ENCODE measurements at regions of chr1 and their contacts with region 1.

Region 1: GRCh38 chr1:204207136-204207616 is 6.6 kb downstream of the GOLT1A start:
- DNase-seq: peak; percentile 89
- ATAC-seq: peak; percentile 98
- H3K4me3 Mint-ChIP-seq: no peak overlapping the region
- H3K27ac Mint-ChIP-seq: no peak overlapping the region
- H3K4me1 Mint-ChIP-seq: peaks cover 12% of the 10 kb centered on the region
- H3K27me3 Mint-ChIP-seq: peaks cover 26% of the 10 kb centered on the region

Region 2: GRCh38 chr1:204104133-204104871 is 102.9 kb before region 1 on chr1:
- CTCF ChIA-PET with region 1: no interaction called
- POLR2A ChIA-PET with region 1: no interaction called
- intact Hi-C with region 1: no loop called
- DNase-seq: peak; percentile 18
- ATAC-seq: peak; percentile 52
- H3K4me3 Mint-ChIP-seq: no peak overlapping the region
- H3K27ac Mint-ChIP-seq: peak overlapping the region; percentile 44
- H3K4me1 Mint-ChIP-seq: peaks cover 26% of the 10 kb centered on the region
- H3K27me3 Mint-ChIP-seq: peaks cover 10% of the 10 kb centered on the region

Region 3: DNA sequence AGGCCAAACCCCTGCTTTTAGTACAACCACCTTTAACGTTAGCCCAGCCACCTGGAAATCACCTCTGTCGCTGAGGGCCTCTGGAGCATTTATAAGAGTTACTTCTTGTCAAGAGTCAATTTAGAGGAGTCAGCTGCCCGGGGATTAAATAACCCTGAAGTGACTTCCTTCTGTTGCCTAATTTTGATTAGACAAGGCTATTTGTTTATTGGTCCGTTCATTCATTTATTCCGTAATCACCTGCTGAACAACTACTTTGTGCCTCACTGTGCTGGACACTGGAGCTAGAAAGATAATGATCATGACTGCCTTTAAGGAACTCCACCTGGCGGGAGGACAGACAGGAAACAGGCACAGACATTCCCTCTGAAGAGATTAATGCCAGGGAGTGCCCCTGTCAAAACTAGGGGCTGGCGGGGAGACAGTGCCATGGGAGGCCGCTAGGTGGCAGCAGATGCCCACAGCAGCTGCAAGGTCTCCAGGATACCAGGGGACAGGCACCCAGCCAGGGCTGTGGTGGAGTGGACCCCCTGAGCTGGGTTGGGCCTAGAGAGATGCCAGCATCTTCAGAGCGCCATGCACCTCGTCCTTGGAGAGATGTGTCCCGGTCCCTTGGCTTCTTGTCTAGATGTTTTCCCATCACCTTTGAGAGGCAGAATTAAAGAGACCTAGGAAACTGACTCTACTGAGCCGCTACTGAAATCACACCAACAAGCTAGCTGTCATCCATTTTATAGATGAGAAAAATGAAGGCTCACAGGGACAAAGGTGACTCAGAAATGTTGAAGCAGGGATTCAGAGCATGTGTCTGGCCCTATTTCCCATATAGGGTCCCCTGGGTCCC is 44.7 kb before region 1 on chr1:
- CTCF ChIA-PET with region 1: interaction called, 33 read pairs
- POLR2A ChIA-PET with region 1: no interaction called
- intact Hi-C with region 1: loop called (anchors 1 kb)
- DNase-seq: peak; percentile 88
- ATAC-seq: peak; percentile 98
- H3K4me3 Mint-ChIP-seq: no peak overlapping the region
- H3K27ac Mint-ChIP-seq: no peak overlapping the region
- H3K4me1 Mint-ChIP-seq: peaks cover 1% of the 10 kb centered on the region
- H3K27me3 Mint-ChIP-seq: peaks cover 7% of the 10 kb centered on the region

Region 4: GRCh38 chr1:204182882-204183281 is 24.3 kb before region 1 on chr1:
- CTCF ChIA-PET with region 1: interaction called, 10 read pairs
- POLR2A ChIA-PET with region 1: no interaction called
- intact Hi-C with region 1: no loop called
- DNase-seq: no peak
- ATAC-seq: no peak
- H3K4me3 Mint-ChIP-seq: no peak overlapping the region
- H3K27ac Mint-ChIP-seq: no peak overlapping the region
- H3K4me1 Mint-ChIP-seq: no peaks in the 10 kb centered on the region
- H3K27me3 Mint-ChIP-seq: peaks cover 10% of the 10 kb centered on the region

Region 5: GRCh38 chr1:204190212-204191211 is 16.7 kb before region 1 on chr1:
- CTCF ChIA-PET with region 1: interaction called, 17 read pairs
- POLR2A ChIA-PET with region 1: no interaction called
- intact Hi-C with region 1: no loop called
- DNase-seq: peak; percentile 46
- ATAC-seq: peak; percentile 55
- H3K4me3 Mint-ChIP-seq: no peak overlapping the region
- H3K27ac Mint-ChIP-seq: no peak overlapping the region
- H3K4me1 Mint-ChIP-seq: peaks cover 16% of the 10 kb centered on the region
- H3K27me3 Mint-ChIP-seq: peaks cover 34% of the 10 kb centered on the region

Region 6: GRCh38 chr1:204256531-204256930 is 49.4 kb after region 1 on chr1:
- CTCF ChIA-PET with region 1: no interaction called
- POLR2A ChIA-PET with region 1: no interaction called
- intact Hi-C with region 1: no loop called
- DNase-seq: no peak
- ATAC-seq: no peak
- H3K4me3 Mint-ChIP-seq: no peak overlapping the region
- H3K27ac Mint-ChIP-seq: no peak overlapping the region
- H3K4me1 Mint-ChIP-seq: no peaks in the 10 kb centered on the region
- H3K27me3 Mint-ChIP-seq: no peaks in the 10 kb centered on the region

Region 7: GRCh38 chr1:204304067-204304466 is 96.9 kb after region 1 on chr1:
- CTCF ChIA-PET with region 1: no interaction called
- POLR2A ChIA-PET with region 1: no interaction called
- intact Hi-C with region 1: no loop called
- DNase-seq: no peak
- ATAC-seq: no peak
- H3K4me3 Mint-ChIP-seq: no peak overlapping the region
- H3K27ac Mint-ChIP-seq: no peak overlapping the region
- H3K4me1 Mint-ChIP-seq: no peaks in the 10 kb centered on the region
- H3K27me3 Mint-ChIP-seq: peaks cover 3% of the 10 kb centered on the region

Region 8: DNA sequence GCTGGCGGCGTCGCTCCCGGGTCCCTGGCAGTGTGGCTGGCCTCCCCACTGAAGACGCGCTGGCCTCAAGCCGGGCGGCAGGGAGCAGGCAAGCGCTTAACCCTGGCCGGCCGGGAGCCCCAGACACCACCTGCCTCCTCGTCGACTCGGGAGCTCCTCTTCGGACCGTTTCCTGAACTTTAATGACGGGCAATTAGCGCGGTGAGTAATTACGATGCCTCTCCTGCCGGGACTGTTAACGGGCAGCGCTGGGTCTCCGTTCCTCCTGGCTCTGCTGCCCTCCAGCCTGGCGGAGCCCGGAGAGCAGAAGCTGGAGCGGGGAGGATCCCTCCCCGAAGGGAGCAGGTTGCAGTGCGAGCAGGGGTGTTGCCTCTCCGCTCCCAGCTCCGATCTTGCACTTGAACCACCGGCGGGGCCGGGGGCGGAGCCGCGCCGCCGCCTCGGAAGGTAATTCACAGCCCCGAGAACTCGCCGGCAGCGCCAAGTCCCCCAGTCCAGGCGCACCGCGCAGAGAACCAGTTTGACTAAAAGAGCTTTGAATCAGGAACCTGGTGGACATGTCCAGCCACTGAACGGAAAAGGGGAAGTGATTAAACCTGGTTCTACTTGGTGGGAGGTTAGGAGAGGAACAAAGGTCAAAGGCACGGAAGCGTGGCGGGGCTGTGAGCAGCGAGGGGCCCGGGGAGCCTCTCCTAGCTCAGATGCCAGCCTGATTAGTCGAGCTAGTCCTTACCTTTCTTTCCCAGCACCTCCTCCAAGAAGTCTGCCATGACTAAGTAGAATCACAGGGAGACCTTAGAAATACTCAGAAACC is 170.8 kb after region 1 on chr1:
- CTCF ChIA-PET with region 1: interaction called, 10 read pairs
- POLR2A ChIA-PET with region 1: no interaction called
- intact Hi-C with region 1: no loop called
- DNase-seq: peak; percentile 67
- ATAC-seq: peak; percentile 71
- H3K4me3 Mint-ChIP-seq: peak overlapping the region; percentile 66
- H3K27ac Mint-ChIP-seq: no peak overlapping the region
- H3K4me1 Mint-ChIP-seq: peaks cover 10% of the 10 kb centered on the region
- H3K27me3 Mint-ChIP-seq: peaks cover 15% of the 10 kb centered on the region

Measured in activated CD4-positive, alpha-beta T cell treated with anti-CD3 and anti-CD28 coated beads for 36 hours (primary cell).